Heart left ventricle (tissue), 16 donors: ENCODE measurements at regions of chr6 and their contacts with region 1.

Region 1: DNA sequence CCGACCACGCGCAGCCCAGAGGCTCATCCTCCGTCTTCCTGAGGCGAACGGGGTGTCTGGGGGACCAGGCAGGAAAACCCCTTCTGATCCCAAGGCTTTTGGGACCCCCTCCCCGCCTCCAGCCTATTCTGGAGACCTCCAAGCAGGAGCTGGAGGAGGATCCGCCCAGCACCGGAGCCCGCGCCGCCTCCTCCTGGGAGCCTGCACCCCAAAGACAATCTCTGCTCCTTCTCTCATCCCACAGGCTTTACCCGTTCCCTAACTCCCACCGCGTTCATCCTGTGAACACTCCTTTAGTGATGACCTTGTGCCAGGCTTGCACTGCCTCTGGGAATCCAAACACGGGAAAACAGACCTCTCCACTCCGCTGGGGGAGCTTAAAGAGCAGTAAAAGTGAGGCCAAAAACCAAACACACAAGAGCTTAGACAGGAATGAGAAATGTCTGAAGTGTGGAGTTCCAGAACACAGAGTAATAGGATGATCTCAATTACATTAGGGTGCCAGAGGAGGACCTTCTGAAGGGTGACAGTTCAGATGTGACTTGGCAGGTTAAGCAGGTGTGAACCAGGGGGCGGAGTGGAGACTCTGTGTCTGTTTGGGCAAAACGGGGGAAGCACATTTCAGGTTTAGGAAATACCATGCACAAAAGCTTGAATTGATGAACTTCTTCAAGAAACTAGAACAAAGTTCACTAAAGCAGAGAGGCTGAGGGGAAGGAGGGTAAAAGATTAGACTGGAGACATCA is 7.6 kb downstream of the HLA-DRB5 start:
- DNase-seq: no peak
- ATAC-seq: no peak
- H3K4me3 ChIP-seq: peak overlapping the region in 4 of 12 donors; percentile 29 to 38 (median 34)
- H3K27ac ChIP-seq: peak overlapping the region in 4 of 12 donors; percentile 2 to 57 (median 36)
- H3K4me1 ChIP-seq: peaks cover 0 to 6% (median 0%) of the 10 kb centered on the region in 12 donors
- H3K27me3 ChIP-seq: peaks cover 0 to 10% (median 0%) of the 10 kb centered on the region in 9 donors
- CTCF ChIP-seq: no peak
- POLR2A ChIP-seq: no peak

Region 2: GRCh38 chr6:32046450-32047083 is 475.9 kb before region 1 on chr6:
- intact Hi-C with region 1: no loop called
- DNase-seq: peak; percentile 41 to 76 (median 69)
- ATAC-seq: peak; percentile 4 to 46 (median 31)
- H3K4me3 ChIP-seq: no peak overlapping the region
- H3K27ac ChIP-seq: peak overlapping the region in 11 of 12 donors; percentile 53 to 88 (median 75)
- H3K4me1 ChIP-seq: peaks cover 0 to 34% (median 24%) of the 10 kb centered on the region in 12 donors
- H3K27me3 ChIP-seq: no peaks in the 10 kb centered on the region
- CTCF ChIP-seq: no peak
- POLR2A ChIP-seq: no peak

Region 3: GRCh38 chr6:32234934-32235333 is 287.5 kb before region 1 on chr6:
- intact Hi-C with region 1: no loop called
- DNase-seq: no peak
- ATAC-seq: peak in 3 of 4 donors; percentile 42 to 84 (median 58)
- H3K4me3 ChIP-seq: no peak overlapping the region
- H3K27ac ChIP-seq: peak overlapping the region; percentile 43 to 89 (median 78)
- H3K4me1 ChIP-seq: peaks cover 0 to 15% (median 0%) of the 10 kb centered on the region in 12 donors
- H3K27me3 ChIP-seq: no peaks in the 10 kb centered on the region
- CTCF ChIP-seq: peak in 8 of 12 donors; percentile 9 to 45 (median 19)
- POLR2A ChIP-seq: no peak

Region 4: GRCh38 chr6:32472781-32473375 is 49.6 kb before region 1 on chr6:
- intact Hi-C with region 1: loop called in 1 of 10 experiments (anchors 5 kb)
- DNase-seq: no peak
- ATAC-seq: peak in 3 of 4 donors; percentile 26 to 62 (median 45)
- H3K4me3 ChIP-seq: no peak overlapping the region
- H3K27ac ChIP-seq: peak overlapping the region in 7 of 12 donors; percentile 19 to 91 (median 66)
- H3K4me1 ChIP-seq: peaks cover 0 to 10% (median 0%) of the 10 kb centered on the region in 12 donors
- H3K27me3 ChIP-seq: peaks cover 0 to 5% (median 0%) of the 10 kb centered on the region in 9 donors
- CTCF ChIP-seq: no peak
- POLR2A ChIP-seq: no peak

Region 5: GRCh38 chr6:32838114-32838958 is 315.9 kb after region 1 on chr6 and contains the start of gene TAP2:
- intact Hi-C with region 1: no loop called
- DNase-seq: peak; percentile 95 to 98 (median 96)
- ATAC-seq: peak; percentile 95 to 97 (median 96)
- H3K4me3 ChIP-seq: peak within 1 kb of the TSS; percentile 60 to 96 (median 78)
- H3K27ac ChIP-seq: peak within 1 kb of the TSS; percentile 69 to 100 (median 96)
- H3K4me1 ChIP-seq: peaks cover 0 to 60% (median 19%) of the 10 kb centered on the region in 12 donors
- H3K27me3 ChIP-seq: no peaks in the 10 kb centered on the region
- CTCF ChIP-seq: peak; percentile 92 to 99 (median 97)
- POLR2A ChIP-seq: peak in 1 of 2 donors; percentile 35
- total RNA-seq, gene TAP2: 5.4 to 107 (median 14.9) TPM